CD4-positive, alpha-beta memory T cell (primary cell): ENCODE measurements at regions of chr1 and their contacts with region 1.

Region 1: DNA sequence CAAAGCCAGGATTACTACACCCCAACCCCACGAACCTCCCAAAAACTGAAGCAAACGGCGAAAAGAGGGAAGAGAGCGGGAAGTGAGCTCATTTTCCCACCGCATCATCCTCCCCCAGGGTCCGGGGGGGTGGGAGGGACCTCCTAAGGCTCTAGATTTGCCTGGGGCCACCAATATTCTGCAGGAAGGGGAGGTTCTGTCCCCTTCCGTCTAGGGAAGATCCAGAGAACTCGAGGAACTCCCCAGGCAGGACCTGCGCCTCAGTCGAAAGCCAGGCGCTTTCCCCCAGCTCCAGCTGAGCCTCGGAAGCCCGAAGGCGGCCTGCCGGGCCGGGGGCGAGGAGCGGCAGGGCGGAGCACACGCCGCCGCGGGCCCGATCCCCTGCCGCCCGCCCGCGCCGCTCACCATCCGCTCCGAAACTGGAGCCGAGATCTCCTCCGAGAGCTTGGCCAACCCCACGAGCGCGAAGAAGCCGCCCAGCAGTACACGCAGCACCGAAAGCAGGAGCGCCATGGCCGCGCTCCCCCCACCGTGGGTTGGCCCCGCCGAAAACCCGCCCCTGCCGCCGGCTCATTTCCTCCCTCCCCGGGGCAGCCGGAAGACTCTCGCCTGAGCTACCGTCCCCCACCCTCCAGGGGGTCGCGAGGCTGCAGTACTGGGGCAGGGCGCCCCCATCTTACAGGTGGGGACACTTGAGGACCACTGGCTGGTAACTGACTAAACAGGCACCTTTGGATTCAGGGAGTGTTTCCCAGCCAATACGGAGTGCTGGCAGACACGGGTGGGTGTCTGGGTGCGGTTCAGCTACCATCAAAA is at the start of gene TMEM35B:
- DNase-seq: peak; percentile 77 to 80 (median 80)
- H3K4me3 ChIP-seq: peak within 1 kb of the TSS; percentile 48 to 88
- H3K4me3 Mint-ChIP-seq: peak within 1 kb of the TSS; percentile 95 to 100 (median 99)
- H3K27ac ChIP-seq: peak within 1 kb of the TSS; percentile 81
- H3K27ac Mint-ChIP-seq: peak within 1 kb of the TSS; percentile 95 to 99 (median 98)
- H3K4me1 ChIP-seq: peaks cover 27% of the 10 kb centered on the region
- H3K4me1 Mint-ChIP-seq: peaks cover 20 to 59% (median 39%) of the 10 kb centered on the region in 4 donors
- H3K27me3 ChIP-seq: no peaks in the 10 kb centered on the region
- H3K27me3 Mint-ChIP-seq: no peaks in the 10 kb centered on the region
- total RNA-seq, gene TMEM35B: 51.7 to 54.2 TPM

Region 2: GRCh38 chr1:34859446-34860200 is 125.4 kb before region 1 on chr1 and contains the start of gene SMIM12:
- CTCF ChIA-PET with region 1: interaction called, 3 read pairs
- POLR2A ChIA-PET with region 1: interaction called, 12 read pairs
- intact Hi-C with region 1: loop called (anchors 10 kb)
- DNase-seq: peak; percentile 82 to 88 (median 83)
- H3K4me3 ChIP-seq: peak within 1 kb of the TSS; percentile 84 to 85
- H3K4me3 Mint-ChIP-seq: peak within 1 kb of the TSS; percentile 93 to 98 (median 96)
- H3K27ac ChIP-seq: peak within 1 kb of the TSS; percentile 89
- H3K27ac Mint-ChIP-seq: peak within 1 kb of the TSS; percentile 94 to 98 (median 96)
- H3K4me1 ChIP-seq: peaks cover 52% of the 10 kb centered on the region
- H3K4me1 Mint-ChIP-seq: peaks cover 41 to 76% (median 56%) of the 10 kb centered on the region in 4 donors
- H3K27me3 ChIP-seq: no peaks in the 10 kb centered on the region
- H3K27me3 Mint-ChIP-seq: no peaks in the 10 kb centered on the region
- total RNA-seq, gene SMIM12: 32.0 to 35.5 TPM

Region 3: GRCh38 chr1:34865981-34866761 is 118.8 kb before region 1 on chr1:
- CTCF ChIA-PET with region 1: interaction called, 7 read pairs
- POLR2A ChIA-PET with region 1: interaction called, 13 read pairs
- intact Hi-C with region 1: loop called (anchors 10 kb)
- DNase-seq: peak; percentile 85 to 92 (median 91)
- H3K4me3 ChIP-seq: peak overlapping the region; percentile 61 to 69
- H3K4me3 Mint-ChIP-seq: peak overlapping the region; percentile 85 to 92 (median 88)
- H3K27ac ChIP-seq: peak overlapping the region; percentile 74
- H3K27ac Mint-ChIP-seq: peak overlapping the region; percentile 86 to 95 (median 92)
- H3K4me1 ChIP-seq: peaks cover 36% of the 10 kb centered on the region
- H3K4me1 Mint-ChIP-seq: peaks cover 20 to 56% (median 34%) of the 10 kb centered on the region in 4 donors
- H3K27me3 ChIP-seq: no peaks in the 10 kb centered on the region
- H3K27me3 Mint-ChIP-seq: peaks cover 1 to 3% of the 10 kb centered on the region in 2 donors

Region 4: DNA sequence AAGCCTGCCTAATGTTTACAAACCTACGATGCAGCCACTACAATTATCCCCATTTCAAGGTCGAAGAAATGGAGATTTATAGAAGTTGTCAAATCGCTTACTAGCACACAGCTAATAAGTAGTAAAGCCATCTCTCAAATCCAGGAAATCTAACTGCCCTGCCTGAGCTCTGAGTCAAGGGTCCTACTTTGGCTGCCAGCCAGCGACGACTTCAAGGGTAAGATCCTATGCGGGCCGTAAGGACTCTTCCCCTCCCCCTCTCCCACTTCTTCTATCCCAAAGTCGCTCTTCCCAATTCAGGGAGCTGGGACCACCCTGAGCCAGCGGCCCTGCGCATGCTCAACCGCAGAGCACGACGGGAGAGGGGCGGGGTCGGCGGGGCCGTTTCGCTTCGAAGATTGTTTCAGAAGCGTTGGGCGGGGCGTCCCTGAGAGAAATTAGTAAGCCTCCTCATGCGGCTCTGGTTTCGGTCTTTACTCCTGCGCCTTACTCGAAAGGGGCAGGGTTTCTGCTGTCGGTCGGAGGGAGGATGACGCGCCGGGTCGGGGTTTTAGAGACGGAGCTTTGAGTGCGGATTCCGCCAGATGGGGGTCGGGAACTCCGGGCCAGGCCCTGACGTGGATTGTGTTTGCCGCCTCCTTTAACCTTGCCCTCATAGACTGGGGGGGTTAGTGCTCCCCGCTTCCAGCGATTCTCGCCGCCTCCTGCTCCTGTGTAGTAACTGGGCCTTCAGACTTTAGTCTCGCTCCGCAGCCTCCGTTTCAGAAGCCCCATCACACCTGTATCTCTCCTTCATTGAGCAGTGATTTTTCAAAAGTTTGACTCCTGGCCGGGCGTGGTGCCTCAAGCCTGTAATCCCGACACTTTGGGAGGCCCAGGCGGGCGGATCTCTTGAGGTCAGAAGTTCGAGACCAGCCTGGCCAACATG is 94.3 kb after region 1 on chr1 and contains the start of gene ZMYM1:
- CTCF ChIA-PET with region 1: no interaction called
- POLR2A ChIA-PET with region 1: interaction called, 10 read pairs
- intact Hi-C with region 1: no loop called
- DNase-seq: peak; percentile 75 to 85 (median 80)
- H3K4me3 ChIP-seq: peak within 1 kb of the TSS; percentile 69 to 94
- H3K4me3 Mint-ChIP-seq: peak within 1 kb of the TSS; percentile 98 to 100 (median 99)
- H3K27ac ChIP-seq: peak within 1 kb of the TSS; percentile 71
- H3K27ac Mint-ChIP-seq: peak within 1 kb of the TSS; percentile 98 to 100 (median 99)
- H3K4me1 ChIP-seq: peaks cover 22% of the 10 kb centered on the region
- H3K4me1 Mint-ChIP-seq: peaks cover 16 to 39% (median 29%) of the 10 kb centered on the region in 4 donors
- H3K27me3 ChIP-seq: no peaks in the 10 kb centered on the region
- H3K27me3 Mint-ChIP-seq: peaks cover 5 to 6% of the 10 kb centered on the region in 2 donors
- total RNA-seq, gene ZMYM1: 24.6 to 25.9 TPM

Region 5: DNA sequence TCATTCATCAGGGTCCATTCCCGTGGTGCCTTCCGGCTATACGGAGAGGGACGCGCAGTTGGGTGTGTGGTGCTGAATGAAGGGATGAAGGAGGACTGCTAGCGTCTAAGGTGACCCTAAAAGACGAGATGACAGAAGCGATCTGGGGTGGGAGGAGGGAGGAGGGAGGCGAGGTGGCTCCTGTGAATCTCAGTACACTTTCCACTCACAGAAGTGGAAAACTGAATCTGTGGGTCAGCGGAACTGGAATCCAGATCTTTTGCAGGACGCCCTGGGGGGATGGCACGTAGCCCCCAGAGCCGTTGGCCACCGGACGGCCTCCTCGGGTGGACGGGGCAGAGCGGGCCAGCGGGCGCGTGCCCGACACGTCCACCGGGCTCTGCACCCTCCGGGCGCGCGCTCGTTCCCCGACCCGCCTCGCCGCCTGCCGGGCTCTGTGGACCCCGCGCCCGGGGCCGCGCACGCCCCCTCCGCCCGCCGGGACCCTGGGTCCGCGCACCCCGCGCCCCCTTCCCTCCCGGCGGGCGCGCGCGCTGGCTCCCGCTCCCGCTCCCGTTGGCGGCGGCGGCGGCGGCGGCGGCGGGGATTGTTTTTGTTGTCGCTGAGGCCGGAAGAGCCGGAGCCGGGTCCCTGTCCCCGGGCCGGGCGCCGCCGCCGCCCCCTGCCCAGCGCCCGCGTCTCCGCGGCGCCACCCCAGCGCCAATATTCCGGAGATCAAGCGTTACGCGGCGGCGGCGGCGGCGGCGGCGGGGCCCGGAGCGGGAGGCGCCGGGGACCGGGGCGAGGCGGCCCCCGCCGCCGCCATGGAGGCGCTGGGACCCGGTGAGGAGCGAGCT is 822.8 kb after region 1 on chr1 and contains the start of gene AGO4:
- CTCF ChIA-PET with region 1: no interaction called
- POLR2A ChIA-PET with region 1: no interaction called
- intact Hi-C with region 1: loop called (anchors 10 kb)
- DNase-seq: peak in 4 of 5 donors; percentile 21 to 36 (median 30)
- H3K4me3 ChIP-seq: peak within 1 kb of the TSS; percentile 26 to 77
- H3K4me3 Mint-ChIP-seq: peak within 1 kb of the TSS; percentile 90 to 96 (median 94)
- H3K27ac ChIP-seq: peak within 1 kb of the TSS; percentile 71
- H3K27ac Mint-ChIP-seq: peak within 1 kb of the TSS; percentile 90 to 97 (median 93)
- H3K4me1 ChIP-seq: peaks cover 45% of the 10 kb centered on the region
- H3K4me1 Mint-ChIP-seq: peaks cover 30 to 58% (median 40%) of the 10 kb centered on the region in 4 donors
- H3K27me3 ChIP-seq: no peaks in the 10 kb centered on the region
- H3K27me3 Mint-ChIP-seq: no peaks in the 10 kb centered on the region
- total RNA-seq, gene AGO4: 30.1 to 32.9 TPM